ENCODE measurements at regions of chr1 and their contacts with region 1.

Region 1: DNA sequence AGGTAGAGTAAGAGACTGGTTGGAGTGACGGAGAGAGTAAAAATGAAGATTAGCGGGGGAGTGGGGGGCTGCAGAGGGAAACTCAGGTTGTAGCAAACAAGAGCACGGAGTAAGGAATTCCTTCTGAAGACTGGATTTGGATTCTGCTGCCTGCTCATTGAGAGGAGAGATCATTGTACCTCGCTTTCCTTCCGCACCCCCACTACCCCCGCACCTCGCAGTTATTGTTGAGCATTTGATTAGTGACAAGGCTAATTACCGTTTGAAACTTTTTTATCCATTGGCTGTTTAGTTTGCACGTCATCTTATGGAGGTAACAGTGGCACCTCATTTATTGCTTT is 463 bp downstream of the PRPF3 start:
- DNase-seq: peak in 5 of 9 donors; percentile 3 to 21 (median 14)
- ATAC-seq: peak; percentile 9
- H3K4me3 ChIP-seq: peak overlapping the region; percentile 97
- H3K4me3 Mint-ChIP-seq: peak overlapping the region; percentile 95 to 100 (median 99)
- H3K27ac ChIP-seq: peak overlapping the region; percentile 76
- H3K27ac Mint-ChIP-seq: peak overlapping the region; percentile 95 to 100 (median 99)
- H3K4me1 ChIP-seq: peaks cover 14 to 16% of the 10 kb centered on the region in 2 donors
- H3K4me1 Mint-ChIP-seq: peaks cover 10 to 54% (median 41%) of the 10 kb centered on the region in 7 donors
- H3K27me3 ChIP-seq: no peaks in the 10 kb centered on the region
- H3K27me3 Mint-ChIP-seq: peaks cover 0 to 2% (median 0%) of the 10 kb centered on the region in 5 donors

Region 2: GRCh38 chr1:149997585-149998262 is 324.1 kb before region 1 on chr1:
- CTCF ChIA-PET with region 1: no interaction called
- POLR2A ChIA-PET with region 1: no interaction called
- intact Hi-C with region 1: no loop called
- DNase-seq: no peak
- ATAC-seq: peak; percentile 81
- H3K4me3 ChIP-seq: no peak overlapping the region
- H3K4me3 Mint-ChIP-seq: peak overlapping the region in 1 of 10 donors; percentile 26
- H3K27ac ChIP-seq: no peak overlapping the region
- H3K27ac Mint-ChIP-seq: no peak overlapping the region
- H3K4me1 ChIP-seq: peaks cover 0 to 4% of the 10 kb centered on the region in 2 donors
- H3K4me1 Mint-ChIP-seq: peaks cover 12 to 33% (median 18%) of the 10 kb centered on the region in 7 donors
- H3K27me3 ChIP-seq: no peaks in the 10 kb centered on the region
- H3K27me3 Mint-ChIP-seq: no peaks in the 10 kb centered on the region

Region 3: GRCh38 chr1:150213170-150214098 is 108.4 kb before region 1 on chr1:
- CTCF ChIA-PET with region 1: no interaction called
- POLR2A ChIA-PET with region 1: no interaction called
- intact Hi-C with region 1: no loop called
- DNase-seq: peak; percentile 72 to 92 (median 88)
- ATAC-seq: peak; percentile 100
- H3K4me3 ChIP-seq: peak overlapping the region; percentile 59
- H3K4me3 Mint-ChIP-seq: peak overlapping the region; percentile 75 to 95 (median 92)
- H3K27ac ChIP-seq: peak overlapping the region; percentile 69
- H3K27ac Mint-ChIP-seq: peak overlapping the region; percentile 84 to 98 (median 97)
- H3K4me1 ChIP-seq: peaks cover 6% of the 10 kb centered on the region in 2 donors
- H3K4me1 Mint-ChIP-seq: peaks cover 5 to 19% (median 18%) of the 10 kb centered on the region in 7 donors
- H3K27me3 ChIP-seq: no peaks in the 10 kb centered on the region
- H3K27me3 Mint-ChIP-seq: peaks cover 0 to 11% (median 0%) of the 10 kb centered on the region in 5 donors

Region 4: GRCh38 chr1:150268705-150269403 is 52.9 kb before region 1 on chr1 and contains the start of gene APH1A:
- CTCF ChIA-PET with region 1: no interaction called
- POLR2A ChIA-PET with region 1: interaction called, 4 read pairs
- intact Hi-C with region 1: loop called (anchors 1 kb)
- DNase-seq: peak; percentile 69 to 92 (median 89)
- ATAC-seq: peak; percentile 97
- H3K4me3 ChIP-seq: peak within 1 kb of the TSS; percentile 87
- H3K4me3 Mint-ChIP-seq: peak within 1 kb of the TSS; percentile 94 to 99 (median 96)
- H3K27ac ChIP-seq: peak within 1 kb of the TSS; percentile 97
- H3K27ac Mint-ChIP-seq: peak within 1 kb of the TSS; percentile 88 to 99 (median 94)
- H3K4me1 ChIP-seq: peaks cover 13 to 20% of the 10 kb centered on the region in 2 donors
- H3K4me1 Mint-ChIP-seq: peaks cover 25 to 39% (median 30%) of the 10 kb centered on the region in 7 donors
- H3K27me3 ChIP-seq: no peaks in the 10 kb centered on the region
- H3K27me3 Mint-ChIP-seq: no peaks in the 10 kb centered on the region
- total RNA-seq, gene APH1A: 112 to 143 (median 127) TPM

Region 5: GRCh38 chr1:150281837-150282653 is 39.8 kb before region 1 on chr1 and contains the start of gene CIART:
- CTCF ChIA-PET with region 1: no interaction called
- POLR2A ChIA-PET with region 1: interaction called, 3 read pairs
- intact Hi-C with region 1: loop called (anchors 1 kb)
- DNase-seq: peak; percentile 34 to 88 (median 82)
- ATAC-seq: peak; percentile 95
- H3K4me3 ChIP-seq: peak within 1 kb of the TSS; percentile 58
- H3K4me3 Mint-ChIP-seq: peak within 1 kb of the TSS; percentile 84 to 98 (median 94)
- H3K27ac ChIP-seq: peak within 1 kb of the TSS; percentile 52
- H3K27ac Mint-ChIP-seq: peak within 1 kb of the TSS; percentile 80 to 98 (median 91)
- H3K4me1 ChIP-seq: peaks cover 11 to 23% of the 10 kb centered on the region in 2 donors
- H3K4me1 Mint-ChIP-seq: peaks cover 20 to 36% (median 32%) of the 10 kb centered on the region in 7 donors
- H3K27me3 ChIP-seq: no peaks in the 10 kb centered on the region
- H3K27me3 Mint-ChIP-seq: peaks cover 0 to 13% (median 0%) of the 10 kb centered on the region in 5 donors
- total RNA-seq, gene CIART: 1.4 to 2.6 (median 2.4) TPM

Measured in naive thymus-derived CD4-positive, alpha-beta T cell (primary cell).